Esophagus muscularis mucosa (tissue), 4 donors: ENCODE measurements at regions of chr2 and their contacts with region 1.

Region 1: DNA sequence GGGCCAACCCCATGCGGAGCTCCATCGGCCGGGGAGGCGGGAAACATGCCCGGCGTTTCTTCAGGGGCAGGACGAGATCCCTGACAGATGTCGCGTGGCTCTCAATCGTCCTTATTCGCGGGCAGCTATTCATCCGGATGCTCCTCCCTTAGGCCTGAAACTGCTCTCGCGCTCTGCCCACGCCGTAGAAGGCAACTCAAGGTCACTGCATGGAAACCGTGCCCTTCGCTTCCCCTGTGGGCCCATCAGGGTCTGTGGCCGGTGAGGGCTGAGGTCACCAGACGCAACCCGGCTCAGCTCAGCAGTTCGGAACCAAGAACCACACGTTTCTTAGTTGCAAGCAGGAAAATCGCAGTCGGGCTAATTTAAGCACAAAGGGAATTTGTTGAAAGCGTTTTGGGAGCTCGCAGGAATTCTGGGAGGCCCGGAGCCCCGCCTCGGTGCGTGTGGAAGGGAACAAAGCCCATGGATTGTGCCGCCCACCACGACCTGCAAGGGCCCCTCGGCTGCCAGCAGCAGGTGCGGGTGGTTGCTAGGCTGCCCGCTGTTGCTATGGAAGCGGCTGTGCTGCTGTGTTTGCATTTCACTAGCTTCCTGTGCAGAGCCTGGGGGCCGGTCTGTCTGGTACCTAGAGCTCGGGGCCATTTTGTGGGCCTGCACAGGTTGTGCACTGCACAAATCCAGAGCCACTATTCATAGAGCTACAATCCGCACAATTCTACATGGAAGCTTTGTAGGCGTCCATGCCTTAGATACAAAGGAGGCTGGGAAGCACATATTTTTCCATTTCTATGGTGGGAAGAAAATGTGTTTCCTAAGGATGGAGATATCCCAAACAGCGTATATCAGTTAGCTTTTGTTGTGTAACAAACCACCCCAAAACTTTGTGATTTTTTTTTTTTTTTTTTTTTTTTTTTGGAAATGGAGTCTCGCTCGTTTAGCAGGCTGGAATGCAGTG is 6.0 kb upstream of the ALLC start:
- DNase-seq: no peak
- H3K4me3 ChIP-seq: peak overlapping the region; percentile 37 to 50 (median 46)
- H3K27ac ChIP-seq: peak overlapping the region; percentile 67 to 83 (median 78)
- H3K4me1 ChIP-seq: peaks cover 11 to 22% (median 20%) of the 10 kb centered on the region in 4 donors
- H3K27me3 ChIP-seq: no peaks in the 10 kb centered on the region
- CTCF ChIP-seq: no peak
- EP300 ChIP-seq: no peak
- POLR2A ChIP-seq: no peak

Region 2: GRCh38 chr2:3423492-3424175 is 228.3 kb before region 1 on chr2:
- intact Hi-C with region 1: loop called (anchors 5 kb)
- DNase-seq: no peak
- H3K4me3 ChIP-seq: no peak overlapping the region
- H3K27ac ChIP-seq: no peak overlapping the region
- H3K4me1 ChIP-seq: peaks cover 0 to 26% (median 22%) of the 10 kb centered on the region in 4 donors
- H3K27me3 ChIP-seq: no peaks in the 10 kb centered on the region
- CTCF ChIP-seq: peak in 2 of 3 experiments; percentile 82 to 94
- EP300 ChIP-seq: no peak
- POLR2A ChIP-seq: no peak

Region 3: DNA sequence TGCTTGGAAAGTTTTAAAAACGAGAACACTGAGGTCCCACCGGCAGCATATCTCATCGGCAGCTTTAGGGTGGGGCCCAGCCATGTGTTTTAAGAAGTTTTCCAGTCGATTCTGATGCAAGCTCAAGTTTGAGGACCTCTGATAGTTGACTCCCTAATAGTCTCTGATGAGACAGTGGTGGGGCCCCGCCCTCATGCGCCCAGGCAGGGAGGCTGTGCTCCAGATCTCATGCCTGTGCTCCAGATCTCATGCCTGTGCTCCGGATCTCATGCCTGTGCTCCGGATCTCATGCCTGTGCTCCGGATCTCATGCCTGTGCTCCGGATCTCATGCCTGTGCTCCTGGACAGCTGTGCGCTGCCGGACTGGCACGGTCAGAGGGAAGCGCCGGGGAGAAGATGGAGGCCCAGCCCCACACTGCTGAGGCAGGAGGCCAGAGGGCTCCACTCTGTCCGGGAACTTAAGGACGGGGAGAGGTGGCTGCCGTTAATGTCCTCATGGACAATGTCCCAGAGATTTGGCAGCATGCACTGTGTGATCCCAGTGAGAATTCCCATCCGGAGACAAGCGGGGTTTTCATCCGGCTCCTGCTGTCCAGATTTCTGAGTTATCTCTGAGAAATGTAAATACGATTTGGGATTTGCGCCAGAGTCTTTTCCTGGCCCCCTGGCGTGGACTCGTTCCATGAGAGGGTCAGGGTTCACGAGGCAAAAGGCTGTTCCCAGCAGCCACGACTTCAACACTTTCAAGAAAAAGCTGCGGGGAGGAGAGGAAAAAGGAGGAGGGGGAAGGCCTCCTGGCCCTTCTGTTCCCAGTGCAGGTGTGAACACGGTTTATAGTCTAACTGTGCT is 66.5 kb before region 1 on chr2:
- intact Hi-C with region 1: loop called (anchors 5 kb)
- DNase-seq: no peak
- H3K4me3 ChIP-seq: peak overlapping the region; percentile 26 to 43 (median 34)
- H3K27ac ChIP-seq: peak overlapping the region; percentile 71 to 81 (median 74)
- H3K4me1 ChIP-seq: peaks cover 6 to 23% (median 21%) of the 10 kb centered on the region in 4 donors
- H3K27me3 ChIP-seq: no peaks in the 10 kb centered on the region
- CTCF ChIP-seq: no peak
- EP300 ChIP-seq: no peak
- POLR2A ChIP-seq: no peak